ENCODE measurements at regions of chr17 and their contacts with region 1.

Region 1: DNA sequence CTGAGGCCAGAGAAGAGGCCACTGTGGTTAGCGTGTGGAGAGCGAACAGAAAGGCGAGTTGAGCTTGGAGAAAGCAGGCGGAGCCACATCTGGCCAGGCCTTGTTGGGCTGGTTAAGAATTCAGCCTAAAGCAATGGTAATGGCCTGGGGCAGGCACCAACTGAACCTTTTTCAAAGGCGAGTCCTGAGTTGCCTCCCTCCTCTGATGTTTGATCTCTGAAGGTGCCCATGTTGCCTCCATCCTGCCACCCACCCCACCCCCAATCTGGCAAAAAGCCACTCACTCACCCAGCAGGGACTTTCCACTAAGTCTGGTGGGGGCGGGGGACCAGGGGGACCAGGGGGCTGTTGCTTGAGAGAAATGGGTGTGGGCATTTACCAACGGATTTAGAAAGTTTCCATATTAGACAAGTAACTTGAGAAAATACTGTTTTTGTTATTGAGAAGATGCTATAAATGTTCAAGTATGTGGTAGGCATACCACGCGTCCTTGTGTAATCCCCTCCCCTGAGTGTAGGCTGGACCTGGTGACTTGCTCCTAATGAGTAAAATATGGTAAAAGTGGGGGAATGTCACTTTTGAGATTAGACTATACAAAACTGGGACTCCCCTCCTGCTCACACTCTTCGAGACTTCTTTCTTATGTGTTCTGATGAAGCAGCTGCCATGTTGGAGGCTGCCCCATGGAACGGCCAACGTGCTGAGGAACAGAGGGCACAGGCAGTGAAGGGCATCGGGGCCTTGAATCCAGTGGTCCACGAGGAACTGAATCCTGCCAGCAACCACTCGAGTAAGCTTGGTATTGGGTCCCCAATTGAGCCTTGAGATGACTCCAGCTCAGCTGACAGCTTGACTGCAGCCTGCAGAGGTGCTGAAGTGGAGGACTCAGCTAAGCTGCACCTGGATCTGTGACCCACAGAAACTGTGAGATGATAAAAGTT is 29.9 kb upstream of the TNS4 start:
- DNase-seq: peak; percentile 34
- ATAC-seq: no peak
- H3K4me3 Mint-ChIP-seq: peak overlapping the region; percentile 37
- H3K27ac Mint-ChIP-seq: peak overlapping the region; percentile 76
- H3K4me1 Mint-ChIP-seq: peaks cover 57% of the 10 kb centered on the region
- H3K27me3 Mint-ChIP-seq: no peaks in the 10 kb centered on the region

Region 2: DNA sequence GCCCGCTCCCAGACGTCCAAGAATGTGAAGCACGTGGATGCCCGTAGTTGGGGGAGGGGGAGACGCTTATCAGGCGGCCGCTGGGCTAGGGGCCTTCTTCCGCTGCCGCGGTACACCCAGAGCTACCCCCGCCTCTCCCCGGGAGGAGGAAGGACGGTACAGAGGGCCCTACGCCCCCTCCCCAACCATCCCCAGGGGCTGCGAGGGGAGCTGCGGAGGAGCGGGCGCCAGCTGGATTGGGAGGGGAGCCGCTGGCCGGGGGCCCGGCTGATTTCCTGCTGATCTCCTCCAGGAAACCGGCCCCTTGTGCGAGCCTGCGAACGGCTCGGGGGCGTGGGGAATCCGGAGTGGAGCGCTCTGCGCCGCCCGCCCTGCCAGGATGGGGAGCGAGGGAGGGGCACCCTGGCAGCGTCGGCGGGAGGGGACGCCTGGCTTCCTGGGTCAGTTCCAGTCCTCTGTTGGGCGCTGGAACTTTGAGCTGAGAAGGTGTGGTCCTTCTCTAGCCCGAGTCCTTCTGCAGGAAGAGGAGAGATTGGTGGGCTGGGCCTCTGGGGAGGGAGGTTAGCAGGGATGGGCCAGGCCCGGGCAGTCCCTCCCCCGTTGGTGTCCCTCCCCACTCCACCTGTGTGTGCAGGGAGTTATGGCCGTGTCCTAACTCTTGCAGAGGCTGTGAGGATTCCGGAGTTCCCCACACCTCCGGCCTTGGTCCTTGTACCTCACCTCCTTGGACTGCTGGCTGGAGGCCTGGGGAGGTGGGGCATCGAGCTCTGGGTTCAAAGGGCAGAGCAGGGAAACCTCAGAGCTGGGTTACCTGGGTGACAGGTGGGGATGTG is 185.9 kb before region 1 on chr17:
- POLR2A ChIA-PET with region 1: no interaction called
- DNase-seq: no peak
- ATAC-seq: peak; percentile 27
- H3K4me3 Mint-ChIP-seq: peak overlapping the region; percentile 68
- H3K27ac Mint-ChIP-seq: peak overlapping the region; percentile 56
- H3K4me1 Mint-ChIP-seq: peaks cover 63% of the 10 kb centered on the region
- H3K27me3 Mint-ChIP-seq: no peaks in the 10 kb centered on the region

Region 3: DNA sequence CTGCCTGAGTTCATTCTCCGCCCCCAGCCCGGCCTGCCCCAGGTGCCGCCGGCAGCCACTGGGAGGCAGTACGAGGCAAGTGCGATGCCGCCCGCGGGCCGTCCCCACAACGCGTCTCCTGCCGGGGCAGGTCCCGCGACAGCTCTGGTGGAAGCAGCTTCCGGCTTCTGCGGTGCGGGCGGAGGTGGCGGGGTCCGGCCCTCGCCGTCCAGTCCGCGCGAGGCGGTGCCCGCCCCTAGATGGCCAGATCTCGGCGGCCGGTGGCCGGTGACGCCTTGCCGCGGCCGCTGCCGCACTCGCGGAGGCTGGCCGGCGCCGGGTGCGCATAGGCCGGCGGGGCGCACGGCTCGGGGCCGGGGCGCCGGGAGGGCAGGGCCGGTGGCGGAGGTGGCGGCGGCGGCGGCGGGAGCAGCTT is 168.6 kb before region 1 on chr17:
- POLR2A ChIA-PET with region 1: interaction called, 17 read pairs
- DNase-seq: peak; percentile 91
- ATAC-seq: peak; percentile 90
- H3K4me3 Mint-ChIP-seq: peak overlapping the region; percentile 80
- H3K27ac Mint-ChIP-seq: peak overlapping the region; percentile 55
- H3K4me1 Mint-ChIP-seq: peaks cover 24% of the 10 kb centered on the region
- H3K27me3 Mint-ChIP-seq: peaks cover 15% of the 10 kb centered on the region

Region 4: DNA sequence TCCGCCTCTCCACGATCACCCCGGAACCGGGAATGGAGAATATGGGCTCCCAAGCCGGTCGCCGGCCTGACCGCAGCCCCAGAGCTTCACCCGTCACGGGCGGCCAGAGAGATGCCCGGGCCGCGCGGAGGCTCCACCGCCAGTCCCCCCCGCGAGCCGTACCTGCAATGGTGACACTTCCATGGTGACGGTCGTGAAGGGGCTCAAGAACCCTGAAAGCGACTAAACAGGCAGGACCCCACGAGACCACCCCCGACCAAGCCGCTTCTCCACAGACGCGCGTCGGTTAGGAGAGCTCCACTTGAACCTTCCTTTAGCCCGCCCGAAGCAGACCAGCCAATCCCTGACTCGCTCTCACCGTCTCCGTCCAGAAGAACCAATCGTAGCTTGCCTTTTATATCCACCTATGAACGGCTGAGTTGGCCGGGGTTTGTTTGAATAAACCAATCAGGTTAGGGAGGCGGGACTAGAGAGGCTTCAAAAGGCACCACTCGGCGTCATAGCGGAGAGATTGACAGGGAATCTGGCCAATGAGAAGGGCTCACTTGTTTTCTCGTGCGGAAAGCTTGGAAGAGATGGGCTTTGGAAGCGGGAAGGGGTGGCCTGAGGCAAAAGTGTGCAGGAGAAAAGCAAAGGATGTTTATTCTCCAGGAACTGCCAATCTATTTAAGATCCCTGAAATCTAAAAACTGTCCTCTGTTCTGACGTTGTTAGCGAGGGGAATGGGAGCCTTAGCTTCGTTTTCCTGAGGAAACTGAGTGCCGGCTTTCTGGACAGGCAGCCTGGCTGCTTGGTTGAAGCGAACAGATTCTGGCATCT is 113.5 kb before region 1 on chr17 and contains the start of gene TOP2A:
- POLR2A ChIA-PET with region 1: interaction called, 30 read pairs
- DNase-seq: peak; percentile 95
- ATAC-seq: peak; percentile 96
- H3K4me3 Mint-ChIP-seq: peak within 1 kb of the TSS; percentile 99
- H3K27ac Mint-ChIP-seq: peak within 1 kb of the TSS; percentile 97
- H3K4me1 Mint-ChIP-seq: peaks cover 33% of the 10 kb centered on the region
- H3K27me3 Mint-ChIP-seq: no peaks in the 10 kb centered on the region
- total RNA-seq, gene TOP2A: 313 to 314 TPM

Region 5: DNA sequence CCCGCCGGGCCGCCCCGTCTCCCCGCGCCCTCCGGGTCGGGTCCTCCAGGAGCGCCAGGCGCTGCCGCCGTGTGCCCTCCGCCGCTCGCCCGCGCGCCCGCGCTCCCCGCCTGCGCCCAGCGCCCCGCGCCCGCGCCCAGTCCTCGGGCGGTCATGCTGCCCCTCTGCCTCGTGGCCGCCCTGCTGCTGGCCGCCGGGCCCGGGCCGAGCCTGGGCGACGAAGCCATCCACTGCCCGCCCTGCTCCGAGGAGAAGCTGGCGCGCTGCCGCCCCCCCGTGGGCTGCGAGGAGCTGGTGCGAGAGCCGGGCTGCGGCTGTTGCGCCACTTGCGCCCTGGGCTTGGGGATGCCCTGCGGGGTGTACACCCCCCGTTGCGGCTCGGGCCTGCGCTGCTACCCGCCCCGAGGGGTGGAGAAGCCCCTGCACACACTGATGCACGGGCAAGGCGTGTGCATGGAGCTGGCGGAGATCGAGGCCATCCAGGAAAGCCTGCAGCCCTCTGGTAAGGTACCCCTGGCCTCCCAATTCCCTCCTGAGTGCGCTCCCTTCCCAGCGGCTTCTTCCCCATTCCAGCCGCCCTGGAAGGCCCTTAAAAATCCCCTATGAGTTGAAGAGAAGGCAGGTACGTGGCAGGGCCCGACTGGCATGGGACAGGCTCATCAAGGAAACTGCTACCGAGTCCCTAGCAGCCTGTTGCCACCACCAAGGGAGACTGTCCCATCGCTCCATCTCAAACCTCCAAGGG is 87.6 kb before region 1 on chr17:
- POLR2A ChIA-PET with region 1: interaction called, 21 read pairs
- DNase-seq: peak; percentile 86
- ATAC-seq: peak; percentile 77
- H3K4me3 Mint-ChIP-seq: peak overlapping the region; percentile 89
- H3K27ac Mint-ChIP-seq: peak overlapping the region; percentile 95
- H3K4me1 Mint-ChIP-seq: peaks cover 44% of the 10 kb centered on the region
- H3K27me3 Mint-ChIP-seq: peaks cover 2% of the 10 kb centered on the region

Region 6: GRCh38 chr17:40474419-40475002 is 56.8 kb before region 1 on chr17:
- POLR2A ChIA-PET with region 1: interaction called, 33 read pairs
- DNase-seq: no peak
- ATAC-seq: no peak
- H3K4me3 Mint-ChIP-seq: no peak overlapping the region
- H3K27ac Mint-ChIP-seq: no peak overlapping the region
- H3K4me1 Mint-ChIP-seq: peaks cover 12% of the 10 kb centered on the region
- H3K27me3 Mint-ChIP-seq: peaks cover 9% of the 10 kb centered on the region

Region 7: GRCh38 chr17:40480501-40481003 is 50.8 kb before region 1 on chr17:
- POLR2A ChIA-PET with region 1: interaction called, 33 read pairs
- DNase-seq: peak; percentile 81
- ATAC-seq: peak; percentile 89
- H3K4me3 Mint-ChIP-seq: peak overlapping the region; percentile 75
- H3K27ac Mint-ChIP-seq: peak overlapping the region; percentile 97
- H3K4me1 Mint-ChIP-seq: peaks cover 66% of the 10 kb centered on the region
- H3K27me3 Mint-ChIP-seq: no peaks in the 10 kb centered on the region

Region 8: DNA sequence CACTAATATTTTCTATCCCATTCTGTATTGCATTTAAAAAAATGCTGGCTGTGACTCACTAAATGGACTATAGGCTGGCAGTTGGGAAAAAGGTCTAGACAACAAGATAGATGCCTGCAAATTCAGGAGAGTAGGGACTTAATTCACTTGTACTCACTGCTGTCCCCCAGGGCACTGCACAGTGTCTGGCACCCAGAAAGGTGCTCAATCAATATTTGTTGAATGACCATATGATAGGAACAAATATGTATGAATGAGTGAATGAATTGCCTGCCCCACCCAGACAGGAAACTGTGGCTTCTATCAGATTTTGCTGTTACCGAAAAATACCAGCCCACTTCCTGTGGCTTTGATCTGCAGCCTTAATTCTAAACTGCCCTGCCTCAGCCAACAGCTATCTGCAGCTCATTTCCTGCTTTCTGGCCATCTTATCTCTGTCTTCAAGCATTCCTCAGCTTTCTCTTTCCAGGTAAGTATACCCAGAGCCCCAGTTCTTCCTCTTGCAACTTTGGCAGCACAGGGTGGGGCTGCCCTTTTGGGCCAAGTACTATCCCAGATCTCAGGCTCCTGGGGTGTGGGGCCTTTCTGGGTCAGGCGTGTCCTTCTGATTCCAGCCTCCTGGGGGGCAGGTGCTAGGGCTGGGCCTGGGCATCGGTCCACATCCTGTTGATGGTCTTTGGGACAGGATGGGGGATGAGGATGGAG is 14.6 kb before region 1 on chr17:
- POLR2A ChIA-PET with region 1: interaction called, 59 read pairs
- DNase-seq: peak; percentile 66
- ATAC-seq: peak; percentile 82
- H3K4me3 Mint-ChIP-seq: peak overlapping the region; percentile 78
- H3K27ac Mint-ChIP-seq: peak overlapping the region; percentile 91
- H3K4me1 Mint-ChIP-seq: peaks cover 56% of the 10 kb centered on the region
- H3K27me3 Mint-ChIP-seq: peaks cover 2% of the 10 kb centered on the region